WTC11 (cell line): ENCODE measurements at regions of chr5 and their contacts with region 1.

Region 1: DNA sequence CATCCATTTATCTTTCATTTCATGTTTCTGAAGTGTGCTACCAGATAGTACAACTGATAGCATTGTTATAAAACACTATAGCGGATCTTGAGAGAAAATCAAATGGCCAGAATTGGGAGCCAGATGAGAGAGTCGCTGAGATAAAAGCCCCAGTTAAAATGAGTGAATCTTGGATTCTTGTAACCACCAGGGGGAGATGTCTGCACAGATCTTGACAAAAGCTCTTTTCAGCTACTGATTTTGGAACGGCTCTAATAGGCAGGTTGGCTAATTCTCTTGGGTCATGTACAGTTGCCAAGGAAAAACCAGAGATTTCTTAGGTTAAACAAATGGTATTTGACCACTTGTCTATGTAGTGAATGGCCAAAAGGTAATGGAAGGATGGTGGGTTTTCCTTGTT is 21.7 kb downstream of the F2RL2 start:
- DNase-seq: no peak
- ATAC-seq: peak; percentile 69
- H3K4me3 Mint-ChIP-seq: no peak overlapping the region
- H3K27ac Mint-ChIP-seq: no peak overlapping the region
- H3K4me1 Mint-ChIP-seq: no peaks in the 10 kb centered on the region
- H3K27me3 Mint-ChIP-seq: no peaks in the 10 kb centered on the region
- CTCF ChIP-seq: peak; percentile 69

Region 2: GRCh38 chr5:76634661-76635060 is 33.2 kb after region 1 on chr5:
- CTCF ChIA-PET with region 1: interaction called, 14 read pairs
- POLR2A ChIA-PET with region 1: no interaction called
- DNase-seq: no peak
- ATAC-seq: no peak
- H3K4me3 Mint-ChIP-seq: no peak overlapping the region
- H3K27ac Mint-ChIP-seq: no peak overlapping the region
- H3K4me1 Mint-ChIP-seq: peaks cover 26% of the 10 kb centered on the region
- H3K27me3 Mint-ChIP-seq: no peaks in the 10 kb centered on the region
- CTCF ChIP-seq: no peak

Region 3: DNA sequence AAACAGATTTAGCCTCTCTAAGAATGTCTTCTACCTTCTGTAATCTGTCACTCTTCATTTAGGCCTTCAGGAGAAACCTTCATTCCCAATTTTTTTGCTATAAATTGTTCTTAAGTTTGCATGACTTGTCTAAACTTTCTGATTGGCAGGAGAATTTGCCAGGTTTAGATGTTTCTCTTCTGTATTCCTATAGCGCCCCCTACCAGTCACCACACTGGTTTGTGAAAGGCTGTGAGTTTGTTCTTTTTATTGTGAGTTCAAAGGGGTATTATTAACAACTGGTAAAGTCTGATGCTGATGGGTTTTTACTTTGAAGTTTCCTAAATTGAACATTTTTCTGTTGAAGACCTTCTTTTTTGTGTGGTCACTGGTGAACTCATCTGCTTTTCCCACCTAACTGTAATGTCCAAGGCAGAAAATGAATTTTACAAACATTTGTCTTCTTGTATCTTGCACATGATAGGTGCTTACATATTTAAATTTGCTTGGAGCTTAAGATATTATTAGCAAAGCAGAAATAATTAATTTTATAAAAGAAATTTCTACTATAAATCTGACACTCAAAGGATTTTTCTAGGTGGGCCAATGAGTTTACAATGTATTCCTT is 40.1 kb after region 1 on chr5:
- CTCF ChIA-PET with region 1: interaction called, 11 read pairs
- POLR2A ChIA-PET with region 1: no interaction called
- DNase-seq: peak; percentile 75
- ATAC-seq: peak; percentile 64; the same call in 1 of the 2 replicates
- H3K4me3 Mint-ChIP-seq: no peak overlapping the region
- H3K27ac Mint-ChIP-seq: no peak overlapping the region; the same call in 1 of the 2 replicates
- H3K4me1 Mint-ChIP-seq: peaks cover 11% of the 10 kb centered on the region
- H3K27me3 Mint-ChIP-seq: no peaks in the 10 kb centered on the region
- CTCF ChIP-seq: peak; percentile 86